ENCODE measurements at regions of chr15 and their contacts with region 1.

Region 1: GRCh38 chr15:48352474-48353072 is 21.3 kb downstream of the DUT start:
- DNase-seq: peak; percentile 50
- ATAC-seq: peak; percentile 97
- H3K4me3 ChIP-seq: no peak overlapping the region
- H3K27ac ChIP-seq: no peak overlapping the region
- H3K4me1 ChIP-seq: no peaks in the 10 kb centered on the region
- H3K27me3 ChIP-seq: no peaks in the 10 kb centered on the region
- CTCF ChIP-seq: peak; percentile 89

Region 2: GRCh38 chr15:47331841-47332393 is 1020.7 kb before region 1 on chr15:
- CTCF ChIA-PET with region 1: interaction called, 12 read pairs
- POLR2A ChIA-PET with region 1: no interaction called
- in situ Hi-C with region 1: no loop called
- intact Hi-C with region 1: no loop called
- DNase-seq: no peak
- ATAC-seq: no peak
- H3K4me3 ChIP-seq: no peak overlapping the region
- H3K27ac ChIP-seq: no peak overlapping the region
- H3K4me1 ChIP-seq: no peaks in the 10 kb centered on the region
- H3K27me3 ChIP-seq: no peaks in the 10 kb centered on the region
- CTCF ChIP-seq: no peak

Region 3: GRCh38 chr15:48645558-48646330 is 293.2 kb after region 1 on chr15 and contains the start of gene FBN1:
- CTCF ChIA-PET with region 1: no interaction called
- POLR2A ChIA-PET with region 1: no interaction called
- in situ Hi-C with region 1: no loop called
- intact Hi-C with region 1: loop called (anchors 10 kb)
- DNase-seq: no peak
- ATAC-seq: peak; percentile 76
- H3K4me3 ChIP-seq: peak within 1 kb of the TSS; percentile 42 to 56
- H3K27ac ChIP-seq: no peak within 1 kb of the TSS
- H3K4me1 ChIP-seq: no peaks in the 10 kb centered on the region; the same call in 1 of the 2 replicates
- H3K27me3 ChIP-seq: peaks cover 12% of the 10 kb centered on the region
- CTCF ChIP-seq: no peak
- total RNA-seq, gene FBN1: 0.46 TPM

Region 4: GRCh38 chr15:49096090-49096750 is 743.6 kb after region 1 on chr15:
- CTCF ChIA-PET with region 1: no interaction called
- POLR2A ChIA-PET with region 1: no interaction called
- in situ Hi-C with region 1: no loop called
- intact Hi-C with region 1: no loop called
- DNase-seq: no peak
- ATAC-seq: no peak
- H3K4me3 ChIP-seq: no peak overlapping the region
- H3K27ac ChIP-seq: no peak overlapping the region
- H3K4me1 ChIP-seq: no peaks in the 10 kb centered on the region
- H3K27me3 ChIP-seq: no peaks in the 10 kb centered on the region
- CTCF ChIP-seq: no peak

Measured in Panc1 (cell line).